ENCODE measurements at regions of chr15 and their contacts with region 1.

Region 1: GRCh38 chr15:72285927-72286516 is 13.7 kb upstream of the PARP6 start:
- DNase-seq: peak; percentile 41
- H3K4me3 ChIP-seq: no peak overlapping the region
- H3K27ac ChIP-seq: no peak overlapping the region
- H3K4me1 ChIP-seq: no peaks in the 10 kb centered on the region
- H3K27me3 ChIP-seq: no peaks in the 10 kb centered on the region
- CTCF ChIP-seq: peak; percentile 42
- EP300 ChIP-seq: no peak
- RAD21 ChIP-seq: peak; percentile 4; the same call in 1 of the 2 replicates

Region 2: DNA sequence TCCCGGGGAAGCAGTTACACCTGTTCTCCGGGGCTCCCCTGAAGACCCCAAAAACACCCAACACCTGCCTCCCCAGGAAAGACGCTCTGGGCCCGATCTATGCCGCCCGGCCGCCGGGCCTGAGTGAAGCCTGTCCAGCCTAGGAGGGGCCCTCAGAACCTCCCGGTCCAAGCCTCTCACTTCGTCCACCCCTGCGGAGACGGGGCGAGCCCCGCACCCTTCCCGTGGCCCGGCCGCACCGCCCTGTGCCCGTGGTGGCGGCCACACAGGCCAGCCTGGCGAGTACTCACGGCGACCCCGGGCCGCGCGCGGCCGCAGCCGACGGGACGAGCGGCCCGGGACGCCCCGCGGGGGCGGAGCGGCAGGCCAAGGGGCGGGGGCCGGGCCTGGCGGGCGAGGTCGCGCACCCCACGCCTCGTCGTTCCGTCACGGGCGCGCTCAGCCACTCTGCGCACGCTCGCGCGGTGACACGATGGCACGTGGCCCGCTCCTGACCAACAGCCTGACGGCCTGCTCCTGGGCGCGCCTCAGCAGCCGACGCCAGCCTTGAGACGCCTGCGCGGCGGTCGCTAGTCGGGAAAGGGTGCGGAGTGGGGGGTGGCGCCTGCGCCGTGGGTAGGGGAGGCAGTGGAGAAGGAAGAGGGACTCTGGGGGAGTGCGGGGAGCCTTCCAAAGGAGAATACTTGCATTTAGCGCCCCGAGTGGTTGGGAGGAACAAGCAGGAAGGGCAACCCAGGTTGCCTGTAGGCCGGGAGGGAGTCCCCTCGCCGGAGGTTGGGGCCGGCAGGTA is 13.6 kb before region 1 on chr15 and contains the start of gene PARP6:
- CTCF ChIA-PET with region 1: interaction called, 14 read pairs
- POLR2A ChIA-PET with region 1: no interaction called
- DNase-seq: peak; percentile 99
- H3K4me3 ChIP-seq: peak within 1 kb of the TSS; percentile 87 to 91
- H3K27ac ChIP-seq: peak within 1 kb of the TSS; percentile 69 to 77
- H3K4me1 ChIP-seq: peaks cover 9 to 12% of the 10 kb centered on the region in 2 experiments; a peak in 3 of 4 replicates
- H3K27me3 ChIP-seq: no peaks in the 10 kb centered on the region
- CTCF ChIP-seq: peak; percentile 73
- EP300 ChIP-seq: no peak; a peak in 1 of 4 replicates
- RAD21 ChIP-seq: 0 out of 2 replicates have a peak, but pooled peaks have one; percentile 12
- polyA plus RNA-seq, gene PARP6: 57.7 and 76.6 TPM in 2 replicates